Activated CD4-positive, alpha-beta memory T cell treated with anti-CD3 and anti-CD28 coated beads for 36 hours (primary cell): ENCODE measurements at regions of chr18 and their contacts with region 1.

Region 1: GRCh38 chr18:58135701-58136331 is 91.8 kb downstream of the NEDD4L start:
- DNase-seq: peak; percentile 69
- H3K4me3 Mint-ChIP-seq: no peak overlapping the region
- H3K27ac Mint-ChIP-seq: no peak overlapping the region
- H3K4me1 Mint-ChIP-seq: peaks cover 9% of the 10 kb centered on the region
- H3K27me3 Mint-ChIP-seq: peaks cover 14% of the 10 kb centered on the region

Region 2: GRCh38 chr18:57827646-57828045 is 308.2 kb before region 1 on chr18:
- CTCF ChIA-PET with region 1: no interaction called
- POLR2A ChIA-PET with region 1: no interaction called
- intact Hi-C with region 1: no loop called
- DNase-seq: no peak
- H3K4me3 Mint-ChIP-seq: no peak overlapping the region
- H3K27ac Mint-ChIP-seq: no peak overlapping the region
- H3K4me1 Mint-ChIP-seq: peaks cover 4% of the 10 kb centered on the region
- H3K27me3 Mint-ChIP-seq: peaks cover 10% of the 10 kb centered on the region

Region 3: DNA sequence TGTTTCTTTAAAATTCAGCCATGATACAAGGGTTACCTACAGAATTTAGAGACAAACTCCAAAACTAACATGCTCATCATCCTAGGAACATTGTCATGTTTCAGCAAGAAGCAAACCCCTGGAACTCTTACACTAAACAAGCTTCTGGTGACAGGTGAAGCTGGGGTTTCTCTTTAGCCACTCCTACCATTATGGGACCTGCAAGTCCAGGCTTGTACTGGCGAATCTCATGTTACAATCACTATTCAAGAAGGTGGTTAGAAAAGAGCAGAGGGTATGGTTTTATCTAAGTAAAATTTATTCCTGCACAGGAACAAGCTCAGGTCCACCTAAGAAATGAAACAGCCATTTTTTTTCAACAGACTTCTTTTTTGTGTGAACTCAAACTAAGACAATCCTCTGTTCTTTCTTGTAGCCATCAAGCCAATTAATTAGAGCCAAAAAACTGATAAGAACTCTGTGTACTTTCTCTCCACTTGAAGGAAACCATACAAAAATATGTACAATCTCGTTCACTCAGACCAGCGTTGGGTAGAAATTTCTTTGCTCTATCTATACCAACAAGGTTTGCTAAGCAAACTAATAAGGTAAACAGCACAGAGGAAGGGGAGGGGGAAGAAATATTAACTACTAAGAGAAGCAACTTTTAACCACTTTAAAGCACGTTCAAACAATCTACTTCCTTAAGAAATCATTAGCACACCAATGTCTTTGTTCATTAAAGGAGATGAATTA is 155.1 kb before region 1 on chr18:
- CTCF ChIA-PET with region 1: no interaction called
- POLR2A ChIA-PET with region 1: no interaction called
- intact Hi-C with region 1: no loop called
- DNase-seq: no peak
- H3K4me3 Mint-ChIP-seq: no peak overlapping the region
- H3K27ac Mint-ChIP-seq: no peak overlapping the region
- H3K4me1 Mint-ChIP-seq: peaks cover 4% of the 10 kb centered on the region
- H3K27me3 Mint-ChIP-seq: peaks cover 13% of the 10 kb centered on the region

Region 4: DNA sequence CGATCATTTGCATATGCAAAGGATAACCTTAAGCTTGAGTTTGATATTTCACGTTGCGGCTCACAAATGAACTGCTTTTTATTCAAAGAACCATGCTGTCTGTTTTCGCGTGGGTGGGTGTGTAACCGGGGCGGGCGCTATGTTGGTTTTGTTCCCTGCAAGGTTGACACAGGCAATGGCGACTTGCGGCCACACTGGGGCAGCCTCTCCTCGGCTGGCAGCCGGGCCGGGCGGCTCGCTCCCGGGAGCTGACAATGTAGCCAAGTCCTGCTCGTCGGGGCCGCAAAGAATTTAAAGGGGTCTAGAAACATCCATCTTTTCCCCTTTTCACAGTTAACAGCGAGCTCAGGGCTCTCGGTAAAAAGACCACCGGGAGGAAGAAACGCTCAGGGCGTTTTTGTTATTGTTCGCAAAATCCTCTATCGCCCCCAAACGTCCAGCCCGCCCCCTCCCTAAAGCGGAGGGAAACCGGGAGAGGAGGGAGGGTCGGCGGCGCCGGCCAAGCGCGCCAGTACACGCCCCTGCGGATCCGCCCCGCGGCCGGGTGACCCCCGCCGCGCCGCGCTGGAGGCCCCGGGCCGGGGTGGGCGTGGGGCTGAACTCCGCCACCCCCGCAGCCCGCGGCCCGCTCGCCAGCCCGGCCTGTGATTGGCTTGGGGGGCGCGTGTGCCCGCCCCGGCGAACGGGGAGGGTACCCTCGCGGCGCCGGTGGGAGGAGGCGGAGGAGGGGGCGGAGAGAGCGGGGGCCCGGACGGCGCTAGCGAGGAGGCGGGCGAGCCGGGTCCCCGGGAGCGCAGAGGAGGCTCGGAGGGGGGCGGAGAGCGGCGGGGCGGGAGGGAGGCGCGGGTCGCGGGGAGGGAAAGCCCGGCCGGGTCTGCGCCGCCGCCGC is 92.1 kb before region 1 on chr18 and contains the start of gene NEDD4L:
- CTCF ChIA-PET with region 1: interaction called, 21 read pairs
- POLR2A ChIA-PET with region 1: no interaction called
- intact Hi-C with region 1: loop called (anchors 1 kb)
- DNase-seq: peak; percentile 89
- H3K4me3 Mint-ChIP-seq: peak within 1 kb of the TSS; percentile 86
- H3K27ac Mint-ChIP-seq: peak within 1 kb of the TSS; percentile 26
- H3K4me1 Mint-ChIP-seq: peaks cover 20% of the 10 kb centered on the region
- H3K27me3 Mint-ChIP-seq: peaks cover 25% of the 10 kb centered on the region
- total RNA-seq, gene NEDD4L: 3.4 to 3.8 TPM

Region 5: GRCh38 chr18:58117786-58118403 is 17.9 kb before region 1 on chr18:
- CTCF ChIA-PET with region 1: interaction called, 19 read pairs
- POLR2A ChIA-PET with region 1: no interaction called
- intact Hi-C with region 1: no loop called
- DNase-seq: no peak
- H3K4me3 Mint-ChIP-seq: no peak overlapping the region
- H3K27ac Mint-ChIP-seq: no peak overlapping the region
- H3K4me1 Mint-ChIP-seq: peaks cover 3% of the 10 kb centered on the region
- H3K27me3 Mint-ChIP-seq: no peaks in the 10 kb centered on the region